IMR-90 (cell line): ENCODE measurements at regions of chr12 and their contacts with region 1.

Region 1: DNA sequence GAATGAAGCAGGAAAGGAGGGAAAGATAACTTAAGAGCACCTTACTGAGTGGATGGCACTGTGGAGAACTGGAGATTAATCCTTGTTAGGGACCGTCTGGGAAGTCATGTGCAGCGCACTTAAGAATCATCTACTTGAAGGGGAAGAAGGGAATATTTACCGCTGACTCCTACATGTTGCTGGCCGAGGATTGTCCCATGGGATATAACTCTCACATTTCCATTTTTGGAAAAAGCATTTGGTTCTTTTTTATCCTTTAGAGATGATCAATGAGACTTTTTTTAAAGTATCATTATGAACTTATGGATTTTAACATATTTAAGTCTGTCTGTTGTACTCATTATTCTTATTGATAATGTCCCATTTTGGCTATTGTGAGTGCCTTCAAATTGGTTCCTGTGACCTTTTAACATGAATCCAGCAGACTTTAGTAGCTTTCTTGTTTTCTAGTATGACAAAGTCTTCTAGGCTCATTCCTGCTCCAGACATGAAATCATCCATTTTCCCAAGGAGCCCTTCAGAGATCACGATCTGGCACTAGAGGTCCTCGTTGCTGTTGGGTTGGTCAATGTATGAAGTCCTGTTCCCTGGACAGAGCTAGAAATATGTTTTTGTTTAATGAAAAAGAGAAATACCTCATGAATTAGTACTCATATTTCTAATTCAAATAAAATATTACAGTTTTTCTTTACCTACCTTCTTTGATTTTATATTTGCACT is 20.2 kb upstream of the FAM234B start:
- DNase-seq: peak; percentile 82
- ATAC-seq: peak; percentile 94
- H3K4me3 ChIP-seq: no peak overlapping the region
- H3K27ac ChIP-seq: no peak overlapping the region
- H3K4me1 ChIP-seq: peaks cover 3% of the 10 kb centered on the region
- H3K27me3 ChIP-seq: peaks cover 2% of the 10 kb centered on the region; the same call in 1 of the 2 replicates
- CTCF ChIP-seq: peak; percentile 80
- POLR2A ChIP-seq: 0 out of 2 replicates have a peak, but pooled peaks have one; percentile 46
- RAD21 ChIP-seq: peak; percentile 85

Region 2: GRCh38 chr12:13082861-13083260 is 58.9 kb after region 1 on chr12:
- CTCF ChIA-PET with region 1: no interaction called
- POLR2A ChIA-PET with region 1: no interaction called
- dilution Hi-C with region 1: no loop called
- in situ Hi-C with region 1: no loop called
- intact Hi-C with region 1: loop called (anchors 2 kb)
- DNase-seq: no peak
- ATAC-seq: no peak
- H3K4me3 ChIP-seq: no peak overlapping the region
- H3K27ac ChIP-seq: no peak overlapping the region
- H3K4me1 ChIP-seq: no peaks in the 10 kb centered on the region
- H3K27me3 ChIP-seq: no peaks in the 10 kb centered on the region
- CTCF ChIP-seq: no peak
- POLR2A ChIP-seq: no peak
- RAD21 ChIP-seq: no peak

Region 3: DNA sequence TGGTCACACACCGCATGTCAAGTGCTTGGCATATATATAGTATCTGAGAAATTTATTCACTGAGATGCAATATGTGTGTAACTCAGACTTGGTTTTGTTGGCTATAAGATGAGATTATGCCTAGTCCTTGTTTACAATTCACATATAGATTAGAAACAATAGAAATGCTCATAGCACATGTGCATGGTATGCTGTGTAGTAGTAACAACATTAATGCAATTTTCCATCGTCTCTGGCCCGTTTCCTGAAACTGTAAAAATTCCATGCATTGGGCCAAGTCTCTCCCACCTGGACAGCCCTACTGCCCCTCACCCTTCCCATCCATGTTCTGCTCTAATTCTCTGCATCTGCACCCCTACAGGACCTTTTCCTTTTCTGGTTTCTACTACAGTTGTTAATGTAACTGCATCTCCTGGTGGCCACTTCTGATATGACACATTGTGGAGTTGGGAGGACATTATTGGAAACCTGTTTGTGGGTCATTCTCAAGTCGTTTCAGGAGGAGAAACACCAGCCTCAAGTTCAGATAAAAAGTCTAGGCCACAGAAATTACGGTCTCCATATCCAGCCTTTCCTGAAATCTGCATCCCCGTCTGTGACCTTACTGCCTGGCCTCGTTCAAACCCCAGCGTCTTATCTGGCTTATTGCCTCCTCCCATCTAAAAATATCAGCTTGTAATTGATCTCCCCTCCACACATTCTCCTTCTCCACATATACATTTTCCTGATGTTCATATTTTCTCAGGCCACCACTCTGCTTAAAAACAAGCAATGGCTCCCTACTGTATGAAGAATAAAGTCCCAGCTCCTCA is 210.1 kb after region 1 on chr12:
- CTCF ChIA-PET with region 1: interaction called, 7 read pairs
- POLR2A ChIA-PET with region 1: no interaction called
- dilution Hi-C with region 1: no loop called
- in situ Hi-C with region 1: no loop called
- intact Hi-C with region 1: loop called (anchors 5 kb)
- DNase-seq: peak; percentile 70
- ATAC-seq: peak; percentile 98
- H3K4me3 ChIP-seq: no peak overlapping the region
- H3K27ac ChIP-seq: no peak overlapping the region
- H3K4me1 ChIP-seq: no peaks in the 10 kb centered on the region
- H3K27me3 ChIP-seq: no peaks in the 10 kb centered on the region
- CTCF ChIP-seq: peak; percentile 90
- POLR2A ChIP-seq: no peak
- RAD21 ChIP-seq: peak; percentile 92